Dorsolateral prefrontal cortex (tissue), 120 donors: ENCODE measurements at regions of chr1 and their contacts with region 1.

Region 1: DNA sequence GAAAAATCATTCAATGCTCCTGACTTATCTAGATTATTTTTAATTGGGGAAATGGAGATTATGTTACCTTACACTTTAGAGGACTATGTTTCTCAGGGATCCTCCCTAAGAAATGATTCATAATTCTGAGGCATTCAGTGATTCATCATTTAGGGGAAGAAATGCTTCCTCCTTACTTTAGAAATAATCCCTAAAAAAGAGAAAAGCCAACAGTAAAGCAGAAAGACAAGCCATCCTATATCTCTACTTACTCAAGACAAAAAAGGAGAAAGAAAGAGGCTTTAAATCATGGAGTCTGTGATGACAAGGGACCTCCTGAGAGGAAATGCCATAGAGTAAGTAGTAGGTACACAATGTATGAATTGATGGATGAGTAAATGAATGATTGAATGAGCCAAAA is 137.0 kb downstream of the BRINP2 start:
- DNase-seq: no peak
- H3K4me3 ChIP-seq: no peak overlapping the region
- H3K27ac ChIP-seq: peak overlapping the region in 57 of 59 donors; percentile 20 to 99 (median 95)
- H3K27me3 ChIP-seq: no peaks in the 10 kb centered on the region
- CTCF ChIP-seq: no peak

Region 2: GRCh38 chr1:177355595-177355994 is 47.8 kb after region 1 on chr1:
- intact Hi-C with region 1: loop called in 1 of 2 experiments (anchors 2 kb)
- DNase-seq: peak in 6 of 10 donors; percentile 20 to 65 (median 37)
- H3K4me3 ChIP-seq: no peak overlapping the region
- H3K27ac ChIP-seq: peak overlapping the region in 16 of 59 donors; percentile 3 to 73 (median 48)
- H3K27me3 ChIP-seq: no peaks in the 10 kb centered on the region
- CTCF ChIP-seq: peak in 54 of 56 donors; percentile 34 to 81 (median 57)